ENCODE measurements at regions of chr17 and their contacts with region 1.

Region 1: GRCh38 chr17:41848788-41849187 is 11.2 kb downstream of the KLHL10 start:
- DNase-seq: no peak
- ATAC-seq: no peak
- H3K4me3 ChIP-seq: no peak overlapping the region
- H3K27ac ChIP-seq: no peak overlapping the region
- H3K4me1 ChIP-seq: no peaks in the 10 kb centered on the region
- H3K27me3 ChIP-seq: no peaks in the 10 kb centered on the region
- CTCF ChIP-seq: no peak

Region 2: GRCh38 chr17:41910701-41911391 is 62.1 kb after region 1 on chr17:
- CTCF ChIA-PET with region 1: no interaction called
- POLR2A ChIA-PET with region 1: no interaction called
- intact Hi-C with region 1: no loop called
- DNase-seq: peak; percentile 91
- ATAC-seq: peak; percentile 97
- H3K4me3 ChIP-seq: peak overlapping the region; percentile 40; the same call in 1 of the 2 replicates
- H3K27ac ChIP-seq: peak overlapping the region; percentile 87
- H3K4me1 ChIP-seq: peaks cover 43% of the 10 kb centered on the region
- H3K27me3 ChIP-seq: no peaks in the 10 kb centered on the region
- CTCF ChIP-seq: no peak

Region 3: GRCh38 chr17:41984454-41984853 is 135.7 kb after region 1 on chr17:
- CTCF ChIA-PET with region 1: interaction called, 11 read pairs
- POLR2A ChIA-PET with region 1: no interaction called
- intact Hi-C with region 1: no loop called
- DNase-seq: no peak
- ATAC-seq: no peak
- H3K4me3 ChIP-seq: no peak overlapping the region
- H3K27ac ChIP-seq: no peak overlapping the region
- H3K4me1 ChIP-seq: peaks cover 2% of the 10 kb centered on the region
- H3K27me3 ChIP-seq: no peaks in the 10 kb centered on the region
- CTCF ChIP-seq: no peak